Caco-2 (cell line): ENCODE measurements at regions of chr3 and their contacts with region 1.

Region 1: DNA sequence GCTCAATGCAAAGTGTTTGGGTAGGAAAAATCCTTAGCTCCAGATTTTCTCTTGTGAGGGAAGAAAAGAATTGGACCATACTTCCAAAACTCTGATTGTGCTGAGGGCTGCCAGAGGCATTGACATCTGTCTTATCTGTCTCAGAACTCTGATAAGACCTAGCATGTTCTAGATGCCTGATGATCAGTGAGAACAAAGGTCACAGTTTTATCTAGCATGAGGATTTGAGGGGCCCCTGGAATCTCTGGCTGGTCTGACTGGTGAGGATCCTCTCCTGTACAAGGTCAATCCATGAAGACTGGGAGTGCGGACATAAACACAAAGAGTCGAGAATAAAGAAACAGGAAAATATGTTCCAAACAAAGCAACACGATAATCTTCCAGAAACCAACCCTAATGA is 40.1 kb downstream of the GPR149 start:
- DNase-seq: peak; percentile 84 to 89
- H3K4me3 ChIP-seq: no peak overlapping the region
- H3K4me3 Mint-ChIP-seq: peak overlapping the region; percentile 51
- H3K27ac Mint-ChIP-seq: peak overlapping the region; percentile 70
- H3K4me1 ChIP-seq: peaks cover 35% of the 10 kb centered on the region
- H3K4me1 Mint-ChIP-seq: peaks cover 31% of the 10 kb centered on the region
- H3K27me3 ChIP-seq: no peaks in the 10 kb centered on the region
- H3K27me3 Mint-ChIP-seq: no peaks in the 10 kb centered on the region
- CTCF ChIP-seq: no peak

Region 2: DNA sequence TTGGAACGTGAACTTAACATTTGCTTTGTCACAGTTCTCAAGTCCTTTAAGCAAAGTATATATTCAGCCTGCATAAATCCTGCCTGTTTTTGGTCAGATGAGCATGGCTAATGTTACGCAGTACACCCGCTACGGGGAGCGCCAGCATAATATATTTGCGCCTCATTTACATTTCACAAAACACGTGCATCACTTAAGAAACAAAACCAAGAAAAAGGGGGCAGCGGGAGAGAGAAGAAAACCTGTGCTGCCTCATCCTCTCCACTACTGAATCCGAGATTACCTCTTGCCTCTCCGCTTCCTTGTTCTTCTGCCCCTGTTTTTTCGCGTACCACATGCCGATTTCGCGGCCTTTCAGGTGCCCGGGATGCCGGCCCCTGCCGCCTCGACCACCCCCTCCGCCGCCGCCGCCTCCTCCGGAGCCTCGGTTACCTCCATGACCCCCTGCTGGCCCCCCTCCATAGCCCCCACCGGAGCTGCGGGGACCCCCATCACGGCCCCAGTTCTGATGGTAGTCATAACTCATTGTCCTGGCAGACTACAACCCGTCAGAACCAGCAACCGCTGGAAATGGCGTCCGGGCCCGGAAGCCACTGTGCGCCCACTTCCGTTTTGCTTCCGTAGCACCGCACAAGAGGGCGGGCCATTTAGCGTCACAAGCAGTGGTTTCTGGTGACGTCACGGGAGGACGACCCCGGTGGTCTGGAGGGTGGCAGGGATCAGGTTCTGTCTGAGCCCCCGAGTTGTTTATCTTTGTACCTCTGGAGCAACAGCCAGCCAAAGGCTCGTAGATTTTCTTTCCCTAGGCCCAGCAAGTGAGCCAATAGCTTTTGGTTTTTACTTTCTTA is 65.7 kb before region 1 on chr3 and contains the start of gene DHX36:
- CTCF ChIA-PET with region 1: no interaction called
- POLR2A ChIA-PET with region 1: no interaction called
- intact Hi-C with region 1: loop called (anchors 1 kb)
- DNase-seq: peak; percentile 87 to 89
- H3K4me3 ChIP-seq: peak within 1 kb of the TSS; percentile 77
- H3K4me3 Mint-ChIP-seq: peak within 1 kb of the TSS; percentile 83
- H3K27ac Mint-ChIP-seq: peak within 1 kb of the TSS; percentile 91
- H3K4me1 ChIP-seq: peaks cover 20% of the 10 kb centered on the region
- H3K4me1 Mint-ChIP-seq: peaks cover 10% of the 10 kb centered on the region
- H3K27me3 ChIP-seq: no peaks in the 10 kb centered on the region
- H3K27me3 Mint-ChIP-seq: no peaks in the 10 kb centered on the region
- CTCF ChIP-seq: no peak
- total RNA-seq, gene DHX36: 76.4 and 87.3 TPM in 2 replicates

Region 3: GRCh38 chr3:154356009-154356408 is 33.9 kb before region 1 on chr3:
- CTCF ChIA-PET with region 1: no interaction called
- POLR2A ChIA-PET with region 1: no interaction called
- intact Hi-C with region 1: loop called (anchors 1 kb)
- DNase-seq: peak; percentile 51 to 52
- H3K4me3 ChIP-seq: no peak overlapping the region
- H3K4me3 Mint-ChIP-seq: no peak overlapping the region
- H3K27ac Mint-ChIP-seq: peak overlapping the region; percentile 33
- H3K4me1 ChIP-seq: peaks cover 14% of the 10 kb centered on the region
- H3K4me1 Mint-ChIP-seq: peaks cover 19% of the 10 kb centered on the region
- H3K27me3 ChIP-seq: no peaks in the 10 kb centered on the region
- H3K27me3 Mint-ChIP-seq: no peaks in the 10 kb centered on the region
- CTCF ChIP-seq: no peak

Region 4: GRCh38 chr3:154367246-154367645 is 22.6 kb before region 1 on chr3:
- CTCF ChIA-PET with region 1: no interaction called
- POLR2A ChIA-PET with region 1: no interaction called
- intact Hi-C with region 1: loop called (anchors 1 kb)
- DNase-seq: peak; percentile 43
- H3K4me3 ChIP-seq: no peak overlapping the region
- H3K4me3 Mint-ChIP-seq: peak overlapping the region; percentile 17
- H3K27ac Mint-ChIP-seq: peak overlapping the region; percentile 72
- H3K4me1 ChIP-seq: peaks cover 22% of the 10 kb centered on the region
- H3K4me1 Mint-ChIP-seq: peaks cover 36% of the 10 kb centered on the region
- H3K27me3 ChIP-seq: no peaks in the 10 kb centered on the region
- H3K27me3 Mint-ChIP-seq: no peaks in the 10 kb centered on the region
- CTCF ChIP-seq: no peak

Region 5: DNA sequence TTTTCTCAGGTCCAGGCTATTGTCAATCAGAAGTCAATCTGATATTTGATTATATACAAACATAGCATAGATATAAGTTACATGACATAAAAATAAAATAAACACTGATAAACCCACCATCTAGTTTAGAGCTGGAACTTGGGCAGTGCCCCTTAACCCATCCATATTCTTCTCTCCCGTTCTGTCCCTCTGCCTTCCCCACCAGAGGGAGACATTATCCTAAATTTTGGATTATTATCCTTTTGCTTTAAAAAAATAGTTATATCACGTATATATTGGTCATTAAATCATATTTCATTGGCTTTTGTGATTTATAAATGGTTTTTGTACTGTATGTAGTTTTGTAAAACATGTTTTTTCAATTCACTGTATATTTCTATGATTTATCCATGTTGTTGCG is 1588.5 kb after region 1 on chr3:
- CTCF ChIA-PET with region 1: no interaction called
- POLR2A ChIA-PET with region 1: no interaction called
- intact Hi-C with region 1: no loop called
- DNase-seq: no peak
- H3K4me3 ChIP-seq: no peak overlapping the region
- H3K4me3 Mint-ChIP-seq: no peak overlapping the region
- H3K27ac Mint-ChIP-seq: no peak overlapping the region
- H3K4me1 ChIP-seq: peaks cover 7% of the 10 kb centered on the region; the same call in 1 of the 2 replicates
- H3K4me1 Mint-ChIP-seq: no peaks in the 10 kb centered on the region
- H3K27me3 ChIP-seq: no peaks in the 10 kb centered on the region
- H3K27me3 Mint-ChIP-seq: no peaks in the 10 kb centered on the region
- CTCF ChIP-seq: peak; percentile 27 to 45